CD8-positive, alpha-beta T cell (primary cell): ENCODE measurements at regions of chr3 and their contacts with region 1.

Region 1: GRCh38 chr3:73086071-73086494 is 24.6 kb downstream of the EBLN2 start:
- DNase-seq: peak in 8 of 9 experiments; percentile 15 to 68 (median 56)
- ATAC-seq: peak; percentile 73
- H3K4me3 ChIP-seq: no peak overlapping the region
- H3K4me3 Mint-ChIP-seq: peak overlapping the region; percentile 27
- H3K27ac ChIP-seq: no peak overlapping the region
- H3K27ac Mint-ChIP-seq: peak overlapping the region; percentile 23
- H3K4me1 ChIP-seq: no peaks in the 10 kb centered on the region
- H3K4me1 Mint-ChIP-seq: peaks cover 7% of the 10 kb centered on the region
- H3K27me3 ChIP-seq: no peaks in the 10 kb centered on the region
- H3K27me3 Mint-ChIP-seq: no peaks in the 10 kb centered on the region
- CTCF ChIP-seq: peak; percentile 92

Region 2: DNA sequence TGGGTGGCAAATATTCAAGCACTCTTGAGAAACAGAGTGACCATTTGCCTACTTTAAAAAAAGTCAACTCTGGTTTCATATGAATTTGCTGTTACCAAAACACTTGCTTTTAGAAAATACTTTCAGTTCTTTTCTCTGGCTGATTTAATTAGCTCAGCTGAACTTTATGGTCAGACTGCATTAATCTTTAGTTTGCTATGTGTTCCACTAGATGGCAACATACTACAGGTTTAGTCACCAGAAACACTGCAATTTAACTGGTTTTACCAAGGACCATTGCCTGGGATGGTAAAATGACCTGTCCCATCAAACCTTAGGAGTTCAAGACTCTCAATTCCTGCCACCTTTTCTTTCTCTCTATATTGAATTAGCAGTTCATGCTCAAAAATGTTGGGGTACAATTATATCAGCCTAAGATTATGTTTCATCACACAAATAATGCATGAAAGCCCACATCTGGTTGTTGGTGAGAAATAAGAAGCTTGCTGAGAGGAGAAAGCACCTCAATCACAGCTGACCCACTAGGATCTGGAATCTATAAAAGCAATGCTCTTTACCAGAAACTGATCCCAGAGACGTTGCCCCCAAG is 1375.1 kb before region 1 on chr3:
- CTCF ChIA-PET with region 1: no interaction called
- POLR2A ChIA-PET with region 1: no interaction called
- intact Hi-C with region 1: loop called in 1 of 2 experiments (anchors 10 kb)
- DNase-seq: peak in 2 of 9 experiments; percentile 59 to 69
- ATAC-seq: peak; percentile 73
- H3K4me3 ChIP-seq: no peak overlapping the region
- H3K4me3 Mint-ChIP-seq: no peak overlapping the region
- H3K27ac ChIP-seq: no peak overlapping the region
- H3K27ac Mint-ChIP-seq: peak overlapping the region; percentile 7
- H3K4me1 ChIP-seq: peaks cover 23% of the 10 kb centered on the region
- H3K4me1 Mint-ChIP-seq: peaks cover 72% of the 10 kb centered on the region
- H3K27me3 ChIP-seq: no peaks in the 10 kb centered on the region
- H3K27me3 Mint-ChIP-seq: no peaks in the 10 kb centered on the region
- CTCF ChIP-seq: peak; percentile 87

Region 3: DNA sequence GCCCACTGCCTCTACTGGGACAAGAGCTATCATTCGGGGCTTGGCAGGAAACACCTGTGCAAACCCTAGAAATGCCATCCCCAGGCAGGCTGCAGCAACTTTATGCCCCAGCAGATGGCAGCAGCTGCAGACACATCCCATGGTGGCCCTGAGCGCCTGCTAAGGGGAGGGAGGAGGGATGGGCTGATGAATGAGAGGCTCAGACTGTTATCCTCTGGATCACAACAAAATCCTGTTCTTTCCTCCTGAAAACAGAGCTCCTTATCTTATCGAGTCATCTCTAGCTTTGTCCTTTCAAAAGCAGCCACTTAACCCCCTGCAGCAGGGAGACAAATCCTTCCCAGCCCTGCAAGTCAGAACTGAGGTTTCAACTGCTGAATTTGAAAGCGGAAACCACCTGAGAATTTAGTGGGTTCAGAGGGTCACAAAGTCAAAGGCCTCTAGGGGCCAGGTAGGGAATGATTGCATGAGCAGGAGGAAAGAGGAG is 1210.6 kb before region 1 on chr3:
- CTCF ChIA-PET with region 1: interaction called, 4 read pairs
- POLR2A ChIA-PET with region 1: no interaction called
- intact Hi-C with region 1: loop called (anchors 1 kb)
- DNase-seq: peak; percentile 60 to 84 (median 71)
- ATAC-seq: peak; percentile 99
- H3K4me3 ChIP-seq: no peak overlapping the region
- H3K4me3 Mint-ChIP-seq: no peak overlapping the region
- H3K27ac ChIP-seq: no peak overlapping the region
- H3K27ac Mint-ChIP-seq: no peak overlapping the region
- H3K4me1 ChIP-seq: no peaks in the 10 kb centered on the region
- H3K4me1 Mint-ChIP-seq: peaks cover 12% of the 10 kb centered on the region
- H3K27me3 ChIP-seq: no peaks in the 10 kb centered on the region
- H3K27me3 Mint-ChIP-seq: peaks cover 3% of the 10 kb centered on the region
- CTCF ChIP-seq: peak; percentile 86

Region 4: DNA sequence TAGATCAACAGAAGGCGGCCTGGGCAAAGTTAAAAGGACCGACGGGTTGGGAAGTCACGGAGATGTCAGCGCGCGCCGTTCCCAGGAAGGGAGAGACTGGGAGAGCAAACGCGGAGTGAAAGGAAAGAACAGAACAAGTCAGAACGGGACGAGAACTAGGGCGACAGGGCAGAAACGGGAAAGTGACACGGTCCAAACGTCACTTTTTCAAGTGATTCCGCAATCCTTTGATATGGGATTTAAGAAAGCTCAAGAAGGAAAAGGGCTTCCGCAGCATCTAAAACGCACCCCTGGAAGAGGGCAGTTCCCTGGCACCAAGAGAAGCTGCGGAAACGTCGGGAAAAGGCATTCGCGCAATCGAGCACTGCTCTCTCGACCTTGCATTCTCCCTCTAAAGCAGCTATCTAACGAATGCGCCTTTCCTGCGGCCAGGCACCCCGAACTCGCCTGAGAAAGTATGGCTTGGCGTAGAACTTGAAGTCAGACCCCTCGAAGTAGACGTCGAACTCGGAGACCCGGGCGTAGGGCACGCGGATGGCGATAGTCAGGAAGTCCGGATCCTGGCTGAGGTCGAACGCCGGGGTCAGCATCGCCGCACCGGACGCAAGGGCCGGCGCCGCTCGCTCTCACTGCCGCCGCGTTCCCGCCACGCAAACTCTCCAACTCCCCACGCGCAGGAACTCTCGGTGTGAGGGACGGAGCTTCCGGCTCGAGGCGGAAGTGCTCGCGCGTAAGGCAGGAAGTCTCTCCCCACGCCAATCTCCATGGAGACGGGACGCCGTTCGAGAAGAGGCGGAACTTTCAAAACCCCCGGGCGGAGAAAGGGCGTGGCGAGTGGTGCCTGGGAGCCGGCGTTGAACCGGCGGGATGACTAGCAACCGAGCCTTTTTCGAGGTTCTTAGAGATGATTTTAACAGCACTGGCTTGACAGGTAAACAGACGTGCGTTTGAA is 238.1 kb before region 1 on chr3 and contains the start of gene SHQ1:
- CTCF ChIA-PET with region 1: interaction called, 21 read pairs
- POLR2A ChIA-PET with region 1: no interaction called
- intact Hi-C with region 1: loop called (anchors 1 kb)
- DNase-seq: peak; percentile 84 to 98 (median 95)
- ATAC-seq: peak; percentile 90
- H3K4me3 ChIP-seq: peak within 1 kb of the TSS; percentile 64 to 92
- H3K4me3 Mint-ChIP-seq: peak within 1 kb of the TSS; percentile 95
- H3K27ac ChIP-seq: peak within 1 kb of the TSS; percentile 16 to 51
- H3K27ac Mint-ChIP-seq: peak within 1 kb of the TSS; percentile 80
- H3K4me1 ChIP-seq: peaks cover 23% of the 10 kb centered on the region
- H3K4me1 Mint-ChIP-seq: peaks cover 53% of the 10 kb centered on the region
- H3K27me3 ChIP-seq: no peaks in the 10 kb centered on the region
- H3K27me3 Mint-ChIP-seq: no peaks in the 10 kb centered on the region
- CTCF ChIP-seq: no peak
- total RNA-seq, gene SHQ1: 7.1 to 11.3 TPM

Region 5: GRCh38 chr3:72938471-72939265 is 147.4 kb before region 1 on chr3:
- CTCF ChIA-PET with region 1: interaction called, 28 read pairs
- POLR2A ChIA-PET with region 1: no interaction called
- intact Hi-C with region 1: loop called (anchors 1 kb)
- DNase-seq: peak in 5 of 9 experiments; percentile 4 to 70 (median 40)
- ATAC-seq: peak; percentile 100
- H3K4me3 ChIP-seq: no peak overlapping the region
- H3K4me3 Mint-ChIP-seq: no peak overlapping the region
- H3K27ac ChIP-seq: no peak overlapping the region
- H3K27ac Mint-ChIP-seq: no peak overlapping the region
- H3K4me1 ChIP-seq: no peaks in the 10 kb centered on the region
- H3K4me1 Mint-ChIP-seq: no peaks in the 10 kb centered on the region
- H3K27me3 ChIP-seq: no peaks in the 10 kb centered on the region
- H3K27me3 Mint-ChIP-seq: no peaks in the 10 kb centered on the region
- CTCF ChIP-seq: peak; percentile 64

Region 6: GRCh38 chr3:73070675-73071575 is 15.2 kb before region 1 on chr3:
- CTCF ChIA-PET with region 1: interaction called, 10 read pairs
- POLR2A ChIA-PET with region 1: no interaction called
- intact Hi-C with region 1: no loop called
- DNase-seq: no peak
- ATAC-seq: no peak
- H3K4me3 ChIP-seq: no peak overlapping the region
- H3K4me3 Mint-ChIP-seq: no peak overlapping the region
- H3K27ac ChIP-seq: no peak overlapping the region
- H3K27ac Mint-ChIP-seq: peak overlapping the region; percentile 39
- H3K4me1 ChIP-seq: no peaks in the 10 kb centered on the region
- H3K4me1 Mint-ChIP-seq: peaks cover 16% of the 10 kb centered on the region
- H3K27me3 ChIP-seq: no peaks in the 10 kb centered on the region
- H3K27me3 Mint-ChIP-seq: no peaks in the 10 kb centered on the region
- CTCF ChIP-seq: no peak